ENCODE measurements at regions of chr17 and their contacts with region 1.

Region 1: GRCh38 chr17:1617620-1618174 is 10.9 kb downstream of the SLC43A2 start:
- DNase-seq: peak; percentile 80 to 88
- ATAC-seq: peak; percentile 86 to 88
- H3K4me3 ChIP-seq: no peak overlapping the region
- H3K27ac ChIP-seq: peak overlapping the region; percentile 83 to 84
- H3K4me1 ChIP-seq: peaks cover 17% of the 10 kb centered on the region
- CTCF ChIP-seq: peak; percentile 48
- EP300 ChIP-seq: no peak
- POLR2A ChIP-seq: no peak
- RAD21 ChIP-seq: peak; percentile 46 to 48; a peak in 4 of 5 replicates

Region 2: GRCh38 chr17:1555651-1556471 is 61.8 kb before region 1 on chr17:
- CTCF ChIA-PET with region 1: no interaction called
- POLR2A ChIA-PET with region 1: no interaction called
- DNase-seq: no peak
- ATAC-seq: no peak
- H3K4me3 ChIP-seq: no peak overlapping the region
- H3K27ac ChIP-seq: no peak overlapping the region
- H3K4me1 ChIP-seq: peaks cover 5% of the 10 kb centered on the region; the same call in 2 of the 3 replicates
- CTCF ChIP-seq: no peak
- EP300 ChIP-seq: no peak
- POLR2A ChIP-seq: no peak
- RAD21 ChIP-seq: no peak

Region 3: DNA sequence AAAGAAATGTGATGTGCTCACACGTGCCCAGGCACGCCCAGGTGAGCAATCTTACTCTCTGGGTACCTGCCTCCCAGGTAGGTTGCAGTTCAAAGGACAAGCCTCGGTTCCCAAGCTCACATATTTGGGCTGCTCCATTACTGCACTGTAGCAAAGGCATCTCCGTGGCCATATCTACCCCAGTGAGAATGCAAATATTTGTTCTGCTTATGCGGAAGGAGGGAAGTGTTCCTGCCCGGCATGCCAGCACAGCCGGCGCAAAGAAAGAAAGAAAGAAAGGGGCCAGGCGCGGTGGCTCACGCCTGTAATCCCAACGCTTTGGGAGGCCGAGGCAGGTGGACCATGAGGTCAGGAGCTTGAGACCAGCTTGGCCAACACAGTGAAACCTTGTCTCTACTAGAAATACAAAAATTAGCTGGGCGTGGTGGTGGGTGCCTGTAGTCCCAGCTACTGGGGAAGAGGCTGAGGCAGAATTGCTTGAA is 19.8 kb before region 1 on chr17:
- CTCF ChIA-PET with region 1: interaction called, 36 read pairs
- POLR2A ChIA-PET with region 1: no interaction called
- DNase-seq: no peak
- ATAC-seq: peak in 1 of 2 experiments; percentile 75; a peak in 3 of 6 replicates
- H3K4me3 ChIP-seq: no peak overlapping the region
- H3K27ac ChIP-seq: peak overlapping the region in 1 of 2 experiments; percentile 61; a peak in 3 of 6 replicates
- H3K4me1 ChIP-seq: peaks cover 7% of the 10 kb centered on the region
- CTCF ChIP-seq: no peak
- EP300 ChIP-seq: no peak
- POLR2A ChIP-seq: no peak
- RAD21 ChIP-seq: no peak

Region 4: DNA sequence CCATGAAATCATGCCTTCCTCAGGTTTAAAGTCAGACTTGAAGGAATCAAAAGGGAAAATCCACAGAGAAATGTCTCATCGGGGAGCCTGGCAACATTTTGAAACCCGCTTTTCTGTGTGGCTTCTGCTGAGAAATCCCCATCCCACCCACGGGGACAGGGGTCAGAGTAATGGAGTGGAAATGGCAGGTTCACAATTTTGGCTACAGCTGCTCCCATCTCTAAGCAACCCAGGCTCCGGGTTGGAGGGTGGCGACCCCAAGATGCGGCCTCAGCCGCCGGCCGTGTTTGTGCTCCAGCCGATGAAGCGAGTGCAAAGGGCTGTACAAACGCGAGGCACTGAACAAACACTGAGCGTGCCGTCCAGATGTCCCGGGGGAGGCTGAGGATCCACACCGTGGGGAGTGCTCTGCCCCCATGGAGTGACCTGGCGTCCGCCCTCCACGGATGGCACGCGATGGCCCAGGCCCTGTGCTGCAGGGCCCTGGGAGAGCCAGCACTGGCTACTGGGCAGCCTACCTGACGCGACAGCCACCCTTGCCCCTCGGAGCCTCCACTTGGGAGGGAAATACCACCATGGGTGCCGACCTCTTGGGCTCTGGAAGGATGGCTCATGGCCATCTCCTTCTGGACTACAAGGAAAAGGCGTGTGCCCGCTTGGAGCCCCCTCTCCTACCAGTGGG is 11.2 kb before region 1 on chr17:
- CTCF ChIA-PET with region 1: interaction called, 43 read pairs
- POLR2A ChIA-PET with region 1: no interaction called
- DNase-seq: no peak
- ATAC-seq: peak in 1 of 2 experiments; percentile 28; a peak in 3 of 6 replicates
- H3K4me3 ChIP-seq: no peak overlapping the region
- H3K27ac ChIP-seq: no peak overlapping the region
- H3K4me1 ChIP-seq: no peaks in the 10 kb centered on the region
- CTCF ChIP-seq: no peak
- EP300 ChIP-seq: no peak
- POLR2A ChIP-seq: no peak
- RAD21 ChIP-seq: no peak

Measured in A549 (cell line).